CD8-positive, alpha-beta T cell (primary cell): ENCODE measurements at regions of chr9 and their contacts with region 1.

Region 1: GRCh38 chr9:72526901-72527800 is 5.7 kb downstream of the TMC1 start:
- DNase-seq: peak; percentile 45 to 88 (median 82)
- ATAC-seq: peak; percentile 86
- H3K4me3 ChIP-seq: peak overlapping the region; percentile 32 to 43
- H3K4me3 Mint-ChIP-seq: peak overlapping the region; percentile 86
- H3K27ac ChIP-seq: peak overlapping the region; percentile 43 to 66
- H3K27ac Mint-ChIP-seq: peak overlapping the region; percentile 94
- H3K4me1 ChIP-seq: peaks cover 18% of the 10 kb centered on the region
- H3K4me1 Mint-ChIP-seq: peaks cover 30% of the 10 kb centered on the region
- H3K27me3 ChIP-seq: no peaks in the 10 kb centered on the region
- H3K27me3 Mint-ChIP-seq: no peaks in the 10 kb centered on the region
- CTCF ChIP-seq: no peak

Region 2: GRCh38 chr9:72443855-72444254 is 83.3 kb before region 1 on chr9:
- CTCF ChIA-PET with region 1: no interaction called
- POLR2A ChIA-PET with region 1: no interaction called
- intact Hi-C with region 1: loop called in 1 of 2 experiments (anchors 1 kb)
- DNase-seq: peak in 3 of 9 experiments; percentile 5 to 51 (median 31)
- ATAC-seq: peak; percentile 64
- H3K4me3 ChIP-seq: no peak overlapping the region
- H3K4me3 Mint-ChIP-seq: no peak overlapping the region
- H3K27ac ChIP-seq: peak overlapping the region in 1 of 2 experiments; percentile 24
- H3K27ac Mint-ChIP-seq: peak overlapping the region; percentile 3
- H3K4me1 ChIP-seq: no peaks in the 10 kb centered on the region
- H3K4me1 Mint-ChIP-seq: peaks cover 12% of the 10 kb centered on the region
- H3K27me3 ChIP-seq: no peaks in the 10 kb centered on the region
- H3K27me3 Mint-ChIP-seq: peaks cover 2% of the 10 kb centered on the region
- CTCF ChIP-seq: no peak

Region 3: GRCh38 chr9:72473474-72474261 is 53.5 kb before region 1 on chr9:
- CTCF ChIA-PET with region 1: no interaction called
- POLR2A ChIA-PET with region 1: no interaction called
- intact Hi-C with region 1: loop called in 1 of 2 experiments (anchors 5 kb)
- DNase-seq: peak in 1 of 9 experiments; percentile 12
- ATAC-seq: peak; percentile 26
- H3K4me3 ChIP-seq: no peak overlapping the region
- H3K4me3 Mint-ChIP-seq: no peak overlapping the region
- H3K27ac ChIP-seq: no peak overlapping the region
- H3K27ac Mint-ChIP-seq: no peak overlapping the region
- H3K4me1 ChIP-seq: peaks cover 6% of the 10 kb centered on the region
- H3K4me1 Mint-ChIP-seq: peaks cover 22% of the 10 kb centered on the region
- H3K27me3 ChIP-seq: no peaks in the 10 kb centered on the region
- H3K27me3 Mint-ChIP-seq: no peaks in the 10 kb centered on the region
- CTCF ChIP-seq: no peak

Region 4: DNA sequence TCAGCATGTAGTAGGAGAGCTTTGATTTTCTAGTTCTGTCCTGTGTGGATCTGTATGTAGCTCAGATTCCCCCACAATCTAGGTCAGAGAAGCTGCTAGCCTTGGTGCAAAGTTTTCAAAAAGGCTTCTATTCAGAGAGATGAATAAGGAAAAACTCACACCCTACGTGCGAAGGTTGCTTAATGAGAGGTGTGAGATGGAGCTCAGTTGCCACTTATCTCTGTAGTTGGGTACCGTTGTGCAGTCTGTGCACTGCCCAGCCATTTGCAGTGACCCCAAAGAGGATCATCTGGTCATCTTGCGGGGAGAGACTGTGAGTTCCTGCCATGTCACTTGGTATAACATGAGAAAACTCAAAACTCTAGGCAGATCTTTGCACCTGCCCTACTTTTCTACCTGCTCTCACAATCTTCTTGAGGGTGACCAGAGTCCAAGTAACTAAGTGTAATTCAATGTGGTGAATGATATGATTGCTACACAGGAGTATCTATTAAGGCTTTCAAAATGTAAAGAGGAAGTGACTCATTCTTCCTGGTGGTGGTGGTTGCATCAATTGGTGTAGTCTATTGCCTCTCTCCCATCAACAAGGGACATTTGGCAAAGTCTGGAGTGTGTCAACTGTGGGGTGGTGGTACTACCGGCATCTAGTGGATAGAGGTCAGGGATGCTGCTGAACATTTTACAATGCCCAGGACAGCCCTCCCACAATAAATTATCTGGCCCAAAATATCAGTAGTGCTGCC is 59.4 kb after region 1 on chr9:
- CTCF ChIA-PET with region 1: no interaction called
- POLR2A ChIA-PET with region 1: no interaction called
- intact Hi-C with region 1: loop called in 1 of 2 experiments (anchors 1 kb)
- DNase-seq: peak in 5 of 9 experiments; percentile 5 to 61 (median 47)
- ATAC-seq: peak; percentile 77
- H3K4me3 ChIP-seq: no peak overlapping the region
- H3K4me3 Mint-ChIP-seq: no peak overlapping the region
- H3K27ac ChIP-seq: no peak overlapping the region
- H3K27ac Mint-ChIP-seq: peak overlapping the region; percentile 50
- H3K4me1 ChIP-seq: no peaks in the 10 kb centered on the region
- H3K4me1 Mint-ChIP-seq: peaks cover 18% of the 10 kb centered on the region
- H3K27me3 ChIP-seq: no peaks in the 10 kb centered on the region
- H3K27me3 Mint-ChIP-seq: peaks cover 3% of the 10 kb centered on the region
- CTCF ChIP-seq: no peak

Region 5: DNA sequence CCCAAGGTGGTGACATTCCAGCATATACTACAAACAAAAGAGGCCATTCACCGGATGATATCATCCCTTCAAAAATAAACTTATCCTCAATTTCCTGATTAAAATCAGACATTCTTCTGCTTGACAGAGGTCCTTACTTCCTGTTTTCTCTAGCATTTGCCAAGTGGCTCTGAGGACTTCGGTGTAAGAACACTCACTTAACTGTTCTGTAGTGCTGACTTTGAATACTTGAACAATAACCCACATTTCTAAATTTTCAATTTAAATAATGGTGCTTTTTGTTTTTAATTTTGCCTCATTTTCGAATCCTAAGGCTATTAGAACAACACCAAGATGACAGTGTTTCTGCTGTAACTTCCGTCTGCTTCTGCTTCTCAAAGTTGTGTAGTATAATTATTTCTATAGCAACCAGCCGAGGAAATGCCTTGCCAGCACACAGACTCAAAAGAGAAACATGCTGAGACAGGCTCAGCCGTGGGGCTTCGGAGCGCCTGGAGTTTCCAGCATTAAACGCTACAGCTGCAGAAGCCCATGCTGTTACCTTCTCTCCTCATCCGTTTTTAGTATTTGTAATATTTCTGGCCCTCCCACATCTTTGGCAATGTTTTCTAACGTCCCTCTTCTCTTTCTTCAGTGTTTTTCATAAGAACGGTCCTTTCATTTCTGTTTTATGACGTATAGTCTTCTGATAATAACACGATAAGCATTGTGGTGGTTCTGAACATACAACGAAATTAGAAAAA is 605.1 kb after region 1 on chr9:
- CTCF ChIA-PET with region 1: no interaction called
- POLR2A ChIA-PET with region 1: no interaction called
- intact Hi-C with region 1: loop called in 1 of 2 experiments (anchors 5 kb)
- DNase-seq: peak; percentile 51 to 92 (median 72)
- ATAC-seq: peak; percentile 90
- H3K4me3 ChIP-seq: peak overlapping the region; percentile 57 to 65
- H3K4me3 Mint-ChIP-seq: peak overlapping the region; percentile 87
- H3K27ac ChIP-seq: peak overlapping the region; percentile 87 to 94
- H3K27ac Mint-ChIP-seq: peak overlapping the region; percentile 95
- H3K4me1 ChIP-seq: peaks cover 7% of the 10 kb centered on the region
- H3K4me1 Mint-ChIP-seq: peaks cover 25% of the 10 kb centered on the region
- H3K27me3 ChIP-seq: no peaks in the 10 kb centered on the region
- H3K27me3 Mint-ChIP-seq: no peaks in the 10 kb centered on the region
- CTCF ChIP-seq: no peak